ENCODE measurements at regions of chr9 and their contacts with region 1.

Region 1: DNA sequence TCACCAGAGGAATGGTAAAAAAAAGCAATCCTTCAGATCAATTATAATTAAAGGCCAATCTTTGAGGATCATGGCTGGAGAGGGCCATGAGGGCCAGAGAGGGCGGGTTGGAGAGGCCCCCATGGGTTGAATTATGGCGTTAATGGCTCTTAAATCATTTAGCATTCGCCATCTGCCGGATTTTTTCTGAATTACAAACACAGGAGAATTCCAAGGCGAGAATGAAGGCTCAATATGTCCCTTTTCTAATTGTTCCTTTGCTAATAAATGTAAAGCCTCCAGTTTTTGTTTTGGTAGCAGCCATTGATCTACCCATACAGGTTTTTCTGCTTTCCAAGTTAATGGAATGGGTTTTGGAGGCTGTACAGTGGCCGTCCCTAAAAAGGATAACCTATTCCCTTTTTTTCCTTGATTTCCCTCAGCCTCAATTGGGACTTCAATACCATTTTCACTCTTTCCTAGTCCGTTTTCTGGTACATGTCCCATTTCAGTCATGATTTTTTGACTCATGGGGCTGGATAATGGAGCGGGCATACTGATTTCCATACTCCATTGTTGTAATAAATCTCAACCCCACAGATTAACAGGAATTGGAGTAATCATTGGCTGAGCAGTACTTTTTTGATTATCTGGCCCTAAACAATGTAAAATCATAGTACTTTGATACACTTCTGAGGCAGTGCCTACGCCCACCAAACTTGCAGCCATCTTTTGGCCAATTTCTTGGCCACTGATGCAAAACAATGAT is 6.7 kb upstream of the TMEM141 start:
- DNase-seq: no peak
- H3K4me3 ChIP-seq: no peak overlapping the region
- CTCF ChIP-seq: no peak
- POLR2A ChIP-seq: no peak

Region 2: GRCh38 chr9:137007108-137007815 is 222.8 kb after region 1 on chr9:
- intact Hi-C with region 1: no loop called
- DNase-seq: no peak
- H3K4me3 ChIP-seq: no peak overlapping the region
- CTCF ChIP-seq: no peak
- POLR2A ChIP-seq: no peak

Region 3: DNA sequence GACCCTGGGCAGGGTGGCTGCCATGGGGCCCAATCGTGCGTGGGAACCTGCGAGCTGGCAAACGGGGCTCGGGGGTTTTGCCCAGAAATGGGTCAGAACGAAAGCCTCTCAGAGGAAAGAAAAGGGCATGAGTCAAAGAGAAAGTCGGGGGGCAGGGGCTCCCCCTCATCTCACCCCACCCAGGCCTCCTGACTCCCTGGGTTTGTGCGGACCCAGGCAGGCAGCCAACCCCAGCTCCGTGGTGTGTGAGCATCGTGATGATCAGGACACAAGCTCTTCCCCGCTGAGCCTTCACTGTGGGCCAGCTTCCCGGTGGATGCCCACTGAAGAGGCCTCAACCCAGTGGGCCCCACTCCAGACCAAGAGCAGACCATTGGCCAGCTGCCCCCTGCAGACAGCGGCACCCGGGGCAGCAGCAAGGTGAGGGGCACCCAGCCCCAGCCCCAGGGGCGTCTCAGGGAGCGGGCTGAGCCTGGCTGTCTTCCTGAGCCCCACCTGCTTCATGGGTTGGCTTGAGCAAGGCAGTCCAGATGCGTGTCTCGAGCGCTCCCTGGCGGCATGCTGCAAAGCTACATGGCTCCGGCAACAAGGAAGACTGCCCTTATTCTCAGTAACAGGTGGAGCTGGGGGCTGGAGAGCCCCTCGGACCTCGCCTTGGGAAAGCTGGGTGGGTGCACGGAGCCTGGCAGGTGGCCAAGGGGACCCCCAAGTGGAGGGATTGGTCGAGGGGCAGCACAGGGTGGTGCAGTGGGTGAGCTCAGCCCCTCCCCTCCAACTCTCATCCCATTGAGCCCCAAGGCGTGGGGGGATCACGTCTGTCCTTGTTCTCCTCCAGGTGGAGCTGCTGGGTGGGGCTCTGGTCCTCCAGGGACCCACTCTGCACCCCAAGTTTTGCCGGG is 250.7 kb after region 1 on chr9:
- intact Hi-C with region 1: loop called (anchors 5 kb)
- DNase-seq: peak; percentile 68 to 96
- H3K4me3 ChIP-seq: no peak overlapping the region
- CTCF ChIP-seq: peak in 1 of 3 donors; percentile 79
- POLR2A ChIP-seq: no peak

Measured in lower leg skin (tissue), 4 donors.